Activated B cell treated with CpG ODN at 0.5 μM for 24 hours (primary cell): ENCODE measurements at regions of chr21 and their contacts with region 1.

Region 1: DNA sequence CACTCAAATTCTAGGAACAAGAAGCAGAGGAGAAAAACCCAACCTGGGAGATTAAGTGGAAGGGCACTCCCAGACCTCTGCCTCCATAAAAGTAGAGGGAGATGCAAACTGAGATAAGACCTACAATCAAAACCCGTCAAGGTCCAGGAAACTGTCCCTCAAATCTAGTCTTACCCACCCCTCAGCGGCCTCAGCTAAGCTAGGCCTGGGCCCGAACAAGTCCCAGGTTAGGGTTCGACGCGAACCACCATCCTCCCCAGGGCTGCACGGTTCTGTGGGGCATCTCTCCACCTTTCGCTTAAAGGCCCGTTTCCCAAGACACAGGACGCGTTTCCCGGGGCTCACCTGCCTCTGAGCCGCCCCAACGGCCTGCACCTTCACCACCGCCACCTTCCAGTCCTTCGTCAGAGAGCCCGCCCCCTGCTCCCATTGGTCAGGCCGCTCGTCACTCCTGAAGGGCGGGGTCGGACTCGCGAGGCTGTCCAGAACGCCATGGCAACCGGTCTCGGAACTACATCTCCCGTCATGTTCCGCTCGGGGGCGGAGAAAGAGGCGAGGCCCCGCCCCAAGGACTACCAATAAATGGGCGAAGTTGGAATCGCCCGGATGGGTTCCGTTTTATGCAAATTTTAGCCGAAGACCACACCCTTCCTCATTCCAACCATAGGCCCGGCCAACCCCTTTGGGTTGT is at the start of gene CRYZL1:
- DNase-seq: peak; percentile 99
- ATAC-seq: peak; percentile 78
- H3K4me3 Mint-ChIP-seq: peak within 1 kb of the TSS; percentile 98
- H3K27ac Mint-ChIP-seq: peak within 1 kb of the TSS; percentile 99
- H3K4me1 Mint-ChIP-seq: peaks cover 19% of the 10 kb centered on the region
- H3K27me3 Mint-ChIP-seq: peaks cover 14% of the 10 kb centered on the region
- CTCF ChIP-seq: no peak
- total RNA-seq, gene CRYZL1: 37.1 and 46.3 TPM in 2 replicates

Region 2: GRCh38 chr21:31659536-31660258 is 1981.8 kb before region 1 on chr21 and contains the start of gene SOD1:
- CTCF ChIA-PET with region 1: no interaction called
- POLR2A ChIA-PET with region 1: no interaction called
- intact Hi-C with region 1: loop called (anchors 5 kb)
- DNase-seq: peak; percentile 93
- ATAC-seq: peak; percentile 97
- H3K4me3 Mint-ChIP-seq: peak within 1 kb of the TSS; percentile 99
- H3K27ac Mint-ChIP-seq: peak within 1 kb of the TSS; percentile 96
- H3K4me1 Mint-ChIP-seq: peaks cover 65% of the 10 kb centered on the region
- H3K27me3 Mint-ChIP-seq: no peaks in the 10 kb centered on the region
- CTCF ChIP-seq: no peak
- total RNA-seq, gene SOD1: 107 and 131 TPM in 2 replicates

Region 3: GRCh38 chr21:32612075-32612998 is 1029.1 kb before region 1 on chr21 and contains the start of gene CFAP298:
- CTCF ChIA-PET with region 1: no interaction called
- POLR2A ChIA-PET with region 1: no interaction called
- intact Hi-C with region 1: loop called (anchors 1 kb)
- DNase-seq: peak; percentile 83
- ATAC-seq: peak; percentile 89
- H3K4me3 Mint-ChIP-seq: peak within 1 kb of the TSS; percentile 97
- H3K27ac Mint-ChIP-seq: peak within 1 kb of the TSS; percentile 96
- H3K4me1 Mint-ChIP-seq: peaks cover 12% of the 10 kb centered on the region
- H3K27me3 Mint-ChIP-seq: no peaks in the 10 kb centered on the region
- CTCF ChIP-seq: no peak
- total RNA-seq, gene CFAP298: 36.4 and 37.3 TPM in 2 replicates

Region 4: GRCh38 chr21:33266050-33266788 is 375.3 kb before region 1 on chr21 and contains the start of gene IL10RB:
- CTCF ChIA-PET with region 1: no interaction called
- POLR2A ChIA-PET with region 1: no interaction called
- intact Hi-C with region 1: loop called (anchors 5 kb)
- DNase-seq: peak; percentile 71
- ATAC-seq: peak; percentile 74
- H3K4me3 Mint-ChIP-seq: peak within 1 kb of the TSS; percentile 92
- H3K27ac Mint-ChIP-seq: peak within 1 kb of the TSS; percentile 95
- H3K4me1 Mint-ChIP-seq: peaks cover 66% of the 10 kb centered on the region
- H3K27me3 Mint-ChIP-seq: no peaks in the 10 kb centered on the region
- CTCF ChIP-seq: no peak
- total RNA-seq, gene IL10RB: 36.7 and 37.9 TPM in 2 replicates

Region 5: GRCh38 chr21:33491373-33492102 is 149.9 kb before region 1 on chr21 and contains the start of gene DNAJC28:
- CTCF ChIA-PET with region 1: no interaction called
- POLR2A ChIA-PET with region 1: no interaction called
- intact Hi-C with region 1: loop called (anchors 1 kb)
- DNase-seq: peak; percentile 97
- ATAC-seq: peak; percentile 98
- H3K4me3 Mint-ChIP-seq: peak within 1 kb of the TSS; percentile 92
- H3K27ac Mint-ChIP-seq: peak within 1 kb of the TSS; percentile 72
- H3K4me1 Mint-ChIP-seq: peaks cover 10% of the 10 kb centered on the region
- H3K27me3 Mint-ChIP-seq: no peaks in the 10 kb centered on the region
- CTCF ChIP-seq: no peak
- total RNA-seq, gene DNAJC28: 0.53 and 0.66 TPM in 2 replicates

Region 6: DNA sequence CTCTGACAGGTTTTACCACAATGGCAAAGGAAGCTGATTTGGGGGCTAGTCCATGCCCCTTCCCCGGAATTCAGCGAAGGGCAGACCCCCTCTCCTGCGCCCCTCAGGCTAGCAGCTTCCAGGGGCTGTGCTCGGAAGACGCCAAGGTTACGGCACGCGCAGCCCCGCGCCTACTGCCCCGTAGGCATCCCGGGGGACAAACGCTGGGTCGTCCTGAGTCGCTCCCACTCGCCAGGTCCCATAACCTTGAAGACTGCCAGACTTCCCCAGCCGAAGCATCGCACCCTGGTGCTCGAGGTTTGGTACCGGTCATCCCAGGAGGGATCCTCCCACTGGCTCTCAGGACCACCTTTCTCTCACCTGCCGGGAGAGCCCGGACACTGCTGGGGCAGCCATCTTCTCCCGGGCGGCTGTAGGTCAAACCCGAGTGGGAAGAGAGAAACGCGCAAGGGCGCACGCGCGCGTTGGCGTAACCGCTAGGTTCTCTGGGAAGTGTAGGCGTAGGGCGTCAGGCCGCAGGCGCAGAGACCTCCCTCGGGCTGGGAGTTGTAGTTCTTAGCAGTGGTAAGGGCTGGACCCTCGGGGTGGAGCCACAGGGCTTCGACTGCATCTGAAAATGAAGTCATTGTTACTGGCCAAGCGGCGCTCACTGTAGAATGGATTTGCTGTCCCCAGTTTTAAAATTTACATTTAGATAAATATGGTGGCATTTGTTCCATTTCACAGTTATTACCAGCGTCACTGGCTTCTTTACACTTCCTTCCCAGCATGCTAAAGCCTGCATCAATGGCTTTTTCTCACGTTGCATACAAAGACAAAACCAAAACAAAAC is 274.1 kb after region 1 on chr21 and contains the start of gene ATP5PO:
- CTCF ChIA-PET with region 1: no interaction called
- POLR2A ChIA-PET with region 1: no interaction called
- intact Hi-C with region 1: loop called (anchors 1 kb)
- DNase-seq: peak; percentile 91
- ATAC-seq: peak; percentile 100
- H3K4me3 Mint-ChIP-seq: peak within 1 kb of the TSS; percentile 99
- H3K27ac Mint-ChIP-seq: peak within 1 kb of the TSS; percentile 96
- H3K4me1 Mint-ChIP-seq: peaks cover 25% of the 10 kb centered on the region
- H3K27me3 Mint-ChIP-seq: no peaks in the 10 kb centered on the region
- CTCF ChIP-seq: no peak
- total RNA-seq, gene ATP5PO: 169 and 193 TPM in 2 replicates

Region 7: GRCh38 chr21:34614633-34615486 is 973.4 kb after region 1 on chr21 and contains the start of gene RCAN1:
- CTCF ChIA-PET with region 1: no interaction called
- POLR2A ChIA-PET with region 1: no interaction called
- intact Hi-C with region 1: loop called (anchors 1 kb)
- DNase-seq: peak; percentile 78
- ATAC-seq: peak; percentile 94
- H3K4me3 Mint-ChIP-seq: peak within 1 kb of the TSS; percentile 82
- H3K27ac Mint-ChIP-seq: peak within 1 kb of the TSS; percentile 82
- H3K4me1 Mint-ChIP-seq: peaks cover 7% of the 10 kb centered on the region
- H3K27me3 Mint-ChIP-seq: peaks cover 1% of the 10 kb centered on the region
- CTCF ChIP-seq: no peak
- total RNA-seq, gene RCAN1: 5.8 and 6.3 TPM in 2 replicates